Activated naive CD4-positive, alpha-beta T cell treated with anti-CD3 and anti-CD28 coated beads for 36 hours (primary cell): ENCODE measurements at regions of chr17 and their contacts with region 1.

Region 1: GRCh38 chr17:76968707-76969597 is 100.7 kb downstream of the MGAT5B start:
- DNase-seq: peak; percentile 77
- H3K4me3 Mint-ChIP-seq: peak overlapping the region; percentile 65
- H3K27ac Mint-ChIP-seq: no peak overlapping the region
- H3K4me1 Mint-ChIP-seq: peaks cover 14% of the 10 kb centered on the region
- H3K27me3 Mint-ChIP-seq: peaks cover 2% of the 10 kb centered on the region

Region 2: GRCh38 chr17:76671123-76671911 is 297.6 kb before region 1 on chr17:
- CTCF ChIA-PET with region 1: no interaction called
- intact Hi-C with region 1: no loop called
- DNase-seq: peak; percentile 100
- H3K4me3 Mint-ChIP-seq: peak overlapping the region; percentile 93
- H3K27ac Mint-ChIP-seq: peak overlapping the region; percentile 92
- H3K4me1 Mint-ChIP-seq: peaks cover 29% of the 10 kb centered on the region
- H3K27me3 Mint-ChIP-seq: no peaks in the 10 kb centered on the region

Region 3: DNA sequence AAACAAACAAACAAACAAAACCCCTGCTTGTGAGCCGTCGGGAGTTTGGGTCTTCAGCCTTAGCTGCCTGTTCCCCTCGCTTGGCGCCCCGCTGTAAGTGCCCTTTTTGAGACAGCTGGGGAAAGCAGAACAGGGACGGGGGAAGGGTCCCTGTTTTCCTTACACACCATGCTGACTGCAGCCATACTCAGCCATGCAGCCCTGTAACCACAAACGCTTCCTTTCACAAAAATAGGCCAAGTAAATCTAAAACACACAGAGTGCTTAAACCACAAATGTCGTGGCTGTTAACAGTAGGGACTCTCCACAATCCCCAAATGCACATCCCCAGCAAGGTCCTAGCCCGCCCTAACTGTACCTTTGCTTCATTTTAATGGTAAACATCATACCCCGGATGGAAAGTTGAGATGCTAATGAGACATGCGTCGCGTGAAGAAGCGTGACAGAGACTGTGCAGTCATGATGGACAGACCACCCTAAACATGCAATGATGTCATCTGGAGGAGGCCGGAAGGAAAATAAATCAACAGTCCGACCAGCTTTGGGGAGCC is 29.1 kb after region 1 on chr17:
- CTCF ChIA-PET with region 1: no interaction called
- intact Hi-C with region 1: loop called (anchors 1 kb)
- DNase-seq: peak; percentile 85
- H3K4me3 Mint-ChIP-seq: peak overlapping the region; percentile 45
- H3K27ac Mint-ChIP-seq: peak overlapping the region; percentile 78
- H3K4me1 Mint-ChIP-seq: peaks cover 55% of the 10 kb centered on the region
- H3K27me3 Mint-ChIP-seq: no peaks in the 10 kb centered on the region